Left cardiac atrium (tissue), 4 donors: ENCODE measurements at regions of chr12 and their contacts with region 1.

Region 1: GRCh38 chr12:76031537-76032073 is at the start of gene PHLDA1:
- DNase-seq: peak; percentile 94
- ATAC-seq: peak; percentile 93 to 94
- total RNA-seq, gene PHLDA1: 9.4 to 15.5 TPM

Region 2: GRCh38 chr12:75553398-75553797 is 478.2 kb before region 1 on chr12:
- intact Hi-C with region 1: loop called in 1 of 2 experiments (anchors 10 kb)
- DNase-seq: no peak
- ATAC-seq: peak; percentile 50 to 61

Region 3: DNA sequence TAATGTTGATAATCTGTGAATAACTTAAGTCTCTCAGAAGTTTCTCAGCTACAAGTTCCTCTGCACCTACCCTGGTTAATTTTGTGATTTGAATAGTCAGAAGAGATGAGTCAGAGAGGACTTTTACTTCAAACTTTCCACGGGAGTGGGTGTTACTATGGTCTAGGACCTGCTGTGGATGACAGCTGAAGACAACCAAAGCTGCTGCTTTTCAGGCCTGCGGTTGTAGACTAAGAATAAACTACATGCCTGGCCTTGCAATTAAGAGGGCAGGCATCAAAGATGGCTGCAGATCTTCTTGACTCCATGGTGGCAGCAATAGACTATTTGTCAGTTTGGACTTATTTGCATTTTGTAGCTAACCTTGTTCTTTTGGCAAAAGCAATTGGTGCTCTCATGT is 293.1 kb before region 1 on chr12:
- intact Hi-C with region 1: no loop called
- DNase-seq: no peak
- ATAC-seq: peak in 1 of 2 donors; percentile 54

Region 4: GRCh38 chr12:75814851-75815754 is 216.5 kb before region 1 on chr12:
- intact Hi-C with region 1: loop called in 1 of 2 experiments (anchors 10 kb)
- DNase-seq: no peak
- ATAC-seq: peak; percentile 88 to 97

Region 5: GRCh38 chr12:75877763-75878621 is 153.6 kb before region 1 on chr12:
- intact Hi-C with region 1: no loop called
- DNase-seq: no peak
- ATAC-seq: no peak

Region 6: GRCh38 chr12:75933101-75933500 is 98.5 kb before region 1 on chr12:
- intact Hi-C with region 1: loop called (anchors 5 to 10 kb)
- DNase-seq: no peak
- ATAC-seq: peak in 1 of 2 donors; percentile 31

Region 7: DNA sequence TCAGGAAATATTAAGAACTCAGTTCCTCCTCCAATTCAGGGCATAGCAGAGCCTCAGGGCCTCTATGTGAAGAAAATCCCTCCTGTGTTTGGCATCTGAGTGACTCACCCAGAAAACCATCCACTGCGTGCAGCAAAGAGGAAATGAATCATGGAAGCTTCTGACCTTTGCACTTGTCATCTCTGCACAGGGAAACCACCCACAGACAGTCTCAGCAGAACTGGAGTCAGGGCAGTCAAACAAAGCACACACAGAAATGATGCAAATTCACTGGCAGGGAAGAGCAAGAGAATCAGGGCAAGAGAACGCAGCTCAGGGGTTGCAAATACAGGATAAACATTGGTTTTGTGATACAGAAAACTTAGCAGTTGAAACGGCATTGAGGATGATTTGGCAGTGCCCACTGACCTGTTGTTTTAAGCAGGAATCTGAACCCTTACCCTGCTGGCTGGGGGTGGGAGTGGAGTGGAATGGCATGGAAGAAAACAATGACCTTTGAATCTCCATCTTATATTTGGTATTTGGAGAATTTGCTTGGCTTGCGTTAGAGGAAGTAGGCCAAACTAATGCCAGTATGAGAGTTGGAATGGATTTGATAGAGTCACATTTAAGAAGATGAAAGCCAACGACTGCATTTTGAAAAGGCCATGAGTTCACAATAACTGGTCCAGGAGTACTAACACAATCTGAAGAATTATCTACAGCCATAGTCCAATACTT is 53.5 kb before region 1 on chr12:
- intact Hi-C with region 1: loop called in 1 of 2 experiments (anchors 2 kb)
- DNase-seq: peak; percentile 70
- ATAC-seq: peak; percentile 95 to 99

Region 8: GRCh38 chr12:75990189-75990912 is 41.3 kb before region 1 on chr12:
- intact Hi-C with region 1: no loop called
- DNase-seq: no peak
- ATAC-seq: no peak